Right ventricle myocardium inferior (tissue), 1 donor: ENCODE measurements at regions of chr5 and their contacts with region 1.

Region 1: GRCh38 chr5:97906135-97906534 is 723.1 kb upstream of the RIOK2 start:
- DNase-seq: no peak
- ATAC-seq: no peak

Region 2: DNA sequence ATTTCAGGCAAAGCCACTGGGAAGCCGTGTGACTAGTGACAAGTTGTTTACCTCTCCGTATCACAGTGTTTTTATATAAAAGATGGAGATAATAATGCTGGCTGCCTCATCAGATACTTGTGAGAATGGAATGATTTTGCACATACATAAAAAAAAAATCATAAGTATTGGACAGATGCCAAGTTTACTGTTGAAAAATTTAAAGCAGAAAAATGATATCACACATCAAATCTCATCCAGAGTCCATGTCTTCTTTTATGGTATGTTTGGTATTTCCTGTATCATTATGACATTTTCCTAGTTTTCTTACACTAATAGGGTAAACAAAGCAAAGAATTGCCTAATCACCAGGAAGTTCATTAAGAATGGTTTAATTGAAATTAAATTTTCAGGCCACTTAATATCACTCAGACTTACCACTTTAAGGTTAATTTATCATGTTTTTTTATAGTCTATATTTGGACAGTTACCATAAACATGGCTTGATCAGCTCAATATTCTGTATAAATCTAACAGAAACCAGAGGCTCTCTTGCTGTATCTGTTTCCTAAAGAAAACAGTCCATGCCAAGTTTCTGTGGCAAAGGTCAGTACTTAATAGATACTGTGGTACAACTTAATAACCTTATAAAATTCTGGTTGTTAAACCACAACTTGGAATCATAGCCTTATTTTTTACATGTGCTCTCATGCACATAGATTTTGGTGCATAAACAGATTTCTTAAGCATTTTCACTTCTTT is 66.6 kb before region 1 on chr5:
- intact Hi-C with region 1: loop called (anchors 10 kb)
- DNase-seq: no peak
- ATAC-seq: no peak

Region 3: DNA sequence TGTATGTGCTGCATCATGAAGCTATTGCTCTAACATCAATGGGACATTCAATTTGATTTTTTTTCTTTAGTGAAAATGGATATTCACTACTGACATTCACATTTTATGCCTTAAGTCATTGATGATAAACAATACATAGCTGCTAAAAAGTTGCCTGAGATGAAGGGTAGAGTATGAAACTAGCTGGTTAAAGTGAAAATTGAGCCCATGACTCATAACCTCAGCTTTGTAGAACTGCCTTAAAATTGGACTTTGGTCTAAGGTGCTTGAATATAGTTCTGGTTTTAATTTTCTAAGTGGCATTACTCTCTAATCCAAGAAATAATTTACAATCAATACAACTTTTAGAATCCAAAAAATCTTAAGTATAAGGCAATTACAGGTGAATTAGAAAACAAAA is 17.4 kb after region 1 on chr5:
- intact Hi-C with region 1: no loop called
- DNase-seq: no peak
- ATAC-seq: no peak